ENCODE measurements at regions of chr14 and their contacts with region 1.

Region 1: DNA sequence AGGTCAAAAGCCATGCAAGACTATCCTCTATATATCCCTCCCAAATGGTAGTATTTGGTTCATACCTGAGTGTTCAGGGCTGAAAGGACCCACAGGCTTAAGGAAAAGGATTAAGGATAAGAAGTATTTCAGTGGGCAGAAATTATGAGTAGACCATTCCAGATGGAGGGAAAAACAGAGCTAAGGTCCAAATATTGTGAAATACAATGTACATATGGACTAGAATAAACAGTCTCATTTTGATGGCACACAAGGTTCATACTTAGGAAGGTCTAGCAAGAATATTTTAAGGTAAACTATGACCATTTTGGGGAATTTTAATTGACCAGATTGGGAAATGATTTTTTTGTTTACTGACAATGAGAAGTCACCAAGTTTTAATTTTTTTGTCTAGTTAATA is 124.6 kb downstream of the PRKD1 start:
- DNase-seq: no peak
- ATAC-seq: no peak
- H3K4me3 ChIP-seq: no peak overlapping the region
- H3K27ac ChIP-seq: no peak overlapping the region
- H3K4me1 ChIP-seq: no peaks in the 10 kb centered on the region; the same call in 1 of the 2 replicates
- H3K27me3 ChIP-seq: no peaks in the 10 kb centered on the region
- CTCF ChIP-seq: no peak

Region 2: DNA sequence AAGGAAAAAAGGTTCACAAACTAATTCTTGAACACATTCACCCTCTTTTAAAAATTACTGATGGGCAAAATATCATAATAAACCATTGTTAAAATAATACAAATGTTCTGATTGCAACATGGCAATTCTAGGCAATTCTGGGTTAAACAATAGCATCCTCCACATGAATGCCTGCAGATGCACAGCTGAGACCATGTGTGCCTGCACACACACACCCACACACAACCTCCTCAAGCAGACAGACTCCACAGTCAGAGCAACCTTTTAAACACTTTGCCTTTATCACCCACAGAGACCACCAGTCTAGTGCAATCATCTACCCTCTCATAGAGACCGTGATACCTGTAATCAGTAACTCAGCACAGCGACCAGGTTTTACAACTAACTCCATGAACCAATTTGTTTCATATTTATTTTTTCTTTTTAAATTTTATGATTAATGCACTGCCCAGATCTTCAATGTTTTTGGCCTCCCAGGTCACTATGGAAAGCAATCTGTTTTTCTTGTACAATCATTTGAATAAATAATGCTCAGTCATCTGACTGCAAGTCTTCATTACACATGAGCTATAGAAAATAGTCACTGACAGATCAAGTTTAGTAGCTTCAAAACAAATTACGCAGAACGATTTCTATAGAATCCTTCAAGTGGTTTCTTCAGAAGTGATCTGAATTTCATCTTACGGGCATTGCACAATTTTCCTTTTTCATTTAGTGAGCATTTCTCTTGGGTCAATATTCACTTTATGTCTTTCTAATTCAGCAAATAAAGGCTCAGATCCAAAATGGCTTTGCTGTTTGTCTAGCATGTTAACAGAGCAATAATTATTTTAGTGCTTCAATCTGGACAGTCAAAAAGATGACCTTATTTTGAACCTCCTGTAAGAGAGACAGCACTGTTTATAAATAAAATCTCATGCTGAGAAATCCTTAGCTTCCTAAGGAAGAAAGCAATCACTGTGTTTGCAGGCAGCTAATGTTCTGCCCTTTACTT is 18.9 kb after region 1 on chr14:
- CTCF ChIA-PET with region 1: no interaction called
- POLR2A ChIA-PET with region 1: no interaction called
- in situ Hi-C with region 1: no loop called
- intact Hi-C with region 1: loop called (anchors 2 kb)
- DNase-seq: no peak
- ATAC-seq: no peak
- H3K4me3 ChIP-seq: no peak overlapping the region
- H3K27ac ChIP-seq: no peak overlapping the region
- H3K4me1 ChIP-seq: no peaks in the 10 kb centered on the region
- H3K27me3 ChIP-seq: no peaks in the 10 kb centered on the region
- CTCF ChIP-seq: no peak

Measured in Panc1 (cell line).